ENCODE measurements at regions of chr22 and their contacts with region 1.

Region 1: DNA sequence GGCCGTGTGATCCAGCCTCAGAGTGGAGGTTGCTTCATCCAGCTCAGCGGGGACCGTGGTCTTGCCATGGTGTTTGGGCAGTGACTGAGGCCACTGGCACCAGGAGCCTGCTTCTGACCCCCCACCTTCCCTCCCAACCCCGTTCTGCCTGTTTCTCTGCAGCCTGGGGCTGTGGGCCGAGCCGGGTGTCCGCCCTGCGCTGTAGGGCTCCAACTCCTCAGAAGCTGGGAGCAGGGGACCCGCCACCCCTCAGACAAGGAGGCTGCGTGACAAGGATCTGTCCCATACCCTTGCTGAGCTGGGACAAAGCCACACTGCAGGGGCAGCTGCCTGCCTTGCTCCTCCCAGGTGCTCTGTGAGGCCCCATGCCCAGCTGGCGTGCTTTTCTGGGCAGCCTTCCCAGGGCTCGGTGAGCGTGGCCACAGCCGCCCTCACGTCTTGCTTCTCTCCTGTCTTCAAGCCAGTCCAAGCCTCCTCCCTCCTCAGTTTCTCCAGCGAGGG is 11.7 kb upstream of the ARFGAP3 start:
- DNase-seq: peak; percentile 48
- ATAC-seq: peak; percentile 65 to 78

Region 2: GRCh38 chr22:42805998-42806830 is 62.6 kb before region 1 on chr22:
- intact Hi-C with region 1: no loop called
- DNase-seq: no peak
- ATAC-seq: peak; percentile 2 to 40

Region 3: DNA sequence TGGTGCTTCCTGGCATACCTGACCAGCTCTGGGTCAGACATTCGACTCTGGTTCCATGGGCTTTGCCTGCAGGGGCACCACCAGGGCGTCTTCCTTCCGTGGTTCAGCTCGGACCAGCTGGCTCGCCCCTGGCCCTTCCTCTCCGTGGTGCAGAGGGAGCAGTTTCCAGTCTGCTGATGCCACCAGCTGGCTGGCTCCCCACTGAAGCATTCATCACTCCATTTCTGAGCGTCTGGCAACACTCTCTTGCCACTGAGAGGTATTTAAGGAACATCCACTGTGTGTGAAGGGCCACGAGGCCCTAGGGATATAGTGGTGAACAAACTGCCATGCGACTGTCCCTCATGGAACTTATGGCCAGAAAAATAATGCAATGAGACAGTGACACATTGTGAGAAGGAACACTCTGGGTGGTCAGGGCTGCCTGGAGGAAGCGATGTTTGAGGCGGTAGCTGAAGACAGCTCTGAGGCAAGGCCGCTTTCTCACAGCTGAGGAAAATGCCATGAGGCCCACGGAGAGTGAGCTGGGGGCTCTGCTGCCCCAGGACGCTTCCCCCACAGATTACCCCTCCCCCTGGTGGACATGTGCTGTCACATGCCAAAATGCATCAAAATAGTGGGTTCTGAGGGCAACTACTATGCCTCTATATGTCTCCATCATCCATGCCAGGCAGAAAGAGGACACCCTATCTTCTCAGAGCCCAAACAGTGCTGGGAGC is 33.1 kb after region 1 on chr22:
- intact Hi-C with region 1: loop called in 1 of 2 experiments (anchors 5 kb)
- DNase-seq: no peak
- ATAC-seq: peak; percentile 57 to 71